Heart right ventricle (tissue), 16 donors: ENCODE measurements at regions of chr17 and their contacts with region 1.

Region 1: DNA sequence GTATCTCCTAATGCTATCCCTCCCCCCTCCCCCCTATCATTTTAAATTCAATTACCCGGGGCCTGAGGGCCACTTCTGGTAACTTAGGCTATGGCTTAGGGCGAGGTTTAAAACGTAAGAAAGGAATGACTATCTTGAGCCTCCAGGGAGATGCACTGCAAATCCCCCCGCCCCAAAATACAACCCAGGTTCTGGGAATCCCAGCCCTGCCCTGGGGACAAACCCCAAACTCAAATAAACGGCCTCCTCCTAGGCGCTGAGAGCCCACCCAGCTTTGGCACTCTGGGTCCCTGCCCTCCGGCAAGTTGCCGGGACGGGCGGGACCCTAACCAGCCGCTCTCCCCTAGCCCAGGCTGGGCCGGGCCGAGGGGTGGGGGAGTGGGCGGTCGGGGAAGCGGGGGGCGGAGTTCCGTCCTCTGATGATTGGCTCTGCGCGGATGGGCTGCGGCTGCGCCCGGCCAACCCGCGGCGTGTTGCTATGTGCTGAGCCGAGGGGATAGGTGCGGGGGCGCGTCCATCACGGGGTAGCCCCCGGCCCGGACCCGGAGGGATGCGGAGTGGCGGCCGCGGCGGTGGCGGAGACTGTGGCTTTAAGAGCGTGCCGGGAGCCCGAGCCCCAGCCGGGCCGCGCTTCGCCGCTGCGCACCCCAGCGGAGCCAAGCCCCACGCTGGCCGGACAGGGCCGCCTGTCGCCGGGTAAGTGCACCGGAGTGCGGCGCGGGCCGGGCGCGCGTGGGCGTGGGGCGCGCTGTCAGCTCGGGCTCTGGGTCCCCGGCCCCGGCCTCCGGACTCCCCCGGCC is at the start of gene YPEL2:
- DNase-seq: peak; percentile 98
- ATAC-seq: peak; percentile 92 to 96 (median 94)
- H3K4me3 ChIP-seq: peak within 1 kb of the TSS; percentile 88 to 99 (median 98)
- H3K27ac ChIP-seq: peak within 1 kb of the TSS; percentile 89 to 99 (median 97)
- H3K4me1 ChIP-seq: peaks cover 9 to 81% (median 76%) of the 10 kb centered on the region in 9 donors
- H3K27me3 ChIP-seq: no peaks in the 10 kb centered on the region
- CTCF ChIP-seq: no peak
- total RNA-seq, gene YPEL2: 12.0 to 57.1 (median 42.0) TPM

Region 2: DNA sequence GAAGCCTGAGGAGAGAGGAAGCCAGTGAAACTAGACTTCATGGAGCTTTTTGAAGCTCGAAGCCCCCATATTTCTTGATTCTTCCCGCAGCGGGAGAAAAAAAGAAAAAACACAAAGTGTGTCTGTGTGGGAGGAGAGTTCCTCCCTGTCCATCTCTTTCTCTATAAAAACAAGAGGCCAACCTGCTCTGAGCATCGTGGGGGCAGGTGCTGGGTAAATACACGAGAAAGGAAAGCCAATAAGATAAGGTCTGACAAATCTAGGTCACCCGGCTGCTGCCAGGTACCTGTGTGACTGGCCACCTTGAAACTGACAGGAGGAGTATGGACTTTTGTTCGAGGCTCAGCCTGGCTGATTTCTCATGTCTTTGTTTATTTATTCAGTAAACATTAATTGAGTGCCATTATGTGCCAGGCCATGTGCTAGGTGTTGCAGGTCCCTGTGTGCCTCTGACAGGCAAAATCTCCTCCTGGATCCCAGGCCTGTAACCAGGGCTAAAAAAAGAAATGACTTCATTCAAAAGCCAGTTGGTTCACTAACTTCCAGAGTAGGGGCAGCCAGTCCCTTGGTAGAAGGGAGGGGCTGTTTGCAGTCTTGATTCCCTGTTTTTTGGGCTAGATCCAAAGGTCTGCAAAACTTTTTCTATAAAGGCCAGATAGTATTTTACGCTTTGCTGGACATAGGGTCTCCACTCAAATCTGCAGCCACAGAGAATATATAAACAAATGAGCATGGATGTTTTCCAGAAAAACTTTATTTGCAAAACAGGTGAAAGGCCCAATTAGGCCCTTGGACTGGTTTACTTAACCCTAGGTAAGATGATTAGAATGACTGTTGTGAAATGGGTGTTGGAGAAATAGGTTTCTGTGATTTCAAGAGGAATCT is 35.7 kb after region 1 on chr17:
- intact Hi-C with region 1: loop called in 7 of 10 experiments (anchors 2 to 5 kb)
- DNase-seq: peak in 1 of 2 donors; percentile 71
- ATAC-seq: peak; percentile 71 to 85 (median 81)
- H3K4me3 ChIP-seq: peak overlapping the region in 1 of 10 donors; percentile 10
- H3K27ac ChIP-seq: peak overlapping the region; percentile 89 to 97 (median 92)
- H3K4me1 ChIP-seq: peaks cover 63 to 100% (median 99%) of the 10 kb centered on the region in 9 donors
- H3K27me3 ChIP-seq: no peaks in the 10 kb centered on the region
- CTCF ChIP-seq: no peak

Region 3: DNA sequence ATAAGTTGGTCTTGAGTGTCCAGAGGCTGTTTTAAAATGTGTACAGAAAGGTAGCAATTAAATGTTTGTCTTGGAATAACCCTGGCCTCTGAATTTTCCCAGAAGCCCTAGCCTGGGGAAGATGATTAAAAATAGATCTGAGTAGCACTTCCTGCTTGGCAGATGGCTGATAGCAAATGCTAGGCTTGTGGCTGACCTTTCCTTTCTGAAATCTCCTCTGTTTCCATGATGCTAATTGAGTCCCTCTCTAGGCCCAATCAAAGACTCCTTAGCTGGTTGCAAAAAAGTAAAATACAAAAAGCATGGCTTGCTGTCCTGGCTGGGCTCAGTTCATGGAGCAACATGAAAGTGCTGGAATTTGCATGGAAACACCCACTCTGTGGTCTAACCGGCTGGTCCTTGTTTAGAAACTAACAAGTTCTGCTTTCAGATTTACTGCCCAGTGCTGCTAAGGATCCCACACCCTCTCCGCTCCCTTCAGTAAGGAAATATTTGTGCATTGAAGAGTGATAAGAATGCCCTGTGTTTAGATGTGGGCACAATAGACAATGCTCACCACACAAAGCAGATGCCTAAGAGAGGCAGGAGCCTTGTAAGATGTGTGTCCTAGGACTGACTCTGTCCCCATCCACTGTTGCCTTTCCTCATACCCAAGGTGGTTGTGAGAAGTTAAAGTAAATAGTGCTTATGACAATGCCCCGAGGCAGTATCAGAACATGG is 41.0 kb after region 1 on chr17:
- intact Hi-C with region 1: loop called in 7 of 10 experiments (anchors 2 to 5 kb)
- DNase-seq: peak in 1 of 2 donors; percentile 80
- ATAC-seq: peak; percentile 69 to 88 (median 84)
- H3K4me3 ChIP-seq: peak overlapping the region in 4 of 10 donors; percentile 4 to 10 (median 6)
- H3K27ac ChIP-seq: peak overlapping the region; percentile 89 to 97 (median 92)
- H3K4me1 ChIP-seq: peaks cover 69 to 100% (median 99%) of the 10 kb centered on the region in 9 donors
- H3K27me3 ChIP-seq: no peaks in the 10 kb centered on the region
- CTCF ChIP-seq: no peak

Region 4: DNA sequence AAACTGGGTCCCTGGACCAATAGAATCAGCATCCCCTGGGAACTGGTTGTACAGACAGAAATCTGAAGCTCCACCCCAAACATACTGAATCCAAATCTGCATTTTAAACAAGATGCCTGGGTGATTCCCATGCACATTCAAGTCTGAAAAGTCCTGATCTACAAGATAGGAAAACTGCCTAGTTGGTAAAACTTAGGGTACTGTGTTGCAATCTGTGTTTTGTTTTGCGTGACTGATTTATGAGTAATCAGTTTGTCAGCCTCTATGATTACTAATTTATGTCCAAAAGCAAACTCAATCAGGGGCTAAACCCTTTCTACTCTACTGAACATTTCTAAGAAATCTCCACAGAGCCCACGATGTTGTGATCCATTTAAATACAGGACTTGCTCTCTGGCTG is 103.9 kb after region 1 on chr17:
- intact Hi-C with region 1: loop called in 9 of 10 experiments (anchors 1 to 5 kb)
- DNase-seq: no peak
- ATAC-seq: peak in 1 of 8 donors; percentile 34
- H3K4me3 ChIP-seq: no peak overlapping the region
- H3K27ac ChIP-seq: peak overlapping the region in 1 of 10 donors; percentile 29
- H3K4me1 ChIP-seq: peaks cover 2 to 70% (median 31%) of the 10 kb centered on the region in 9 donors
- H3K27me3 ChIP-seq: no peaks in the 10 kb centered on the region
- CTCF ChIP-seq: no peak

Region 5: DNA sequence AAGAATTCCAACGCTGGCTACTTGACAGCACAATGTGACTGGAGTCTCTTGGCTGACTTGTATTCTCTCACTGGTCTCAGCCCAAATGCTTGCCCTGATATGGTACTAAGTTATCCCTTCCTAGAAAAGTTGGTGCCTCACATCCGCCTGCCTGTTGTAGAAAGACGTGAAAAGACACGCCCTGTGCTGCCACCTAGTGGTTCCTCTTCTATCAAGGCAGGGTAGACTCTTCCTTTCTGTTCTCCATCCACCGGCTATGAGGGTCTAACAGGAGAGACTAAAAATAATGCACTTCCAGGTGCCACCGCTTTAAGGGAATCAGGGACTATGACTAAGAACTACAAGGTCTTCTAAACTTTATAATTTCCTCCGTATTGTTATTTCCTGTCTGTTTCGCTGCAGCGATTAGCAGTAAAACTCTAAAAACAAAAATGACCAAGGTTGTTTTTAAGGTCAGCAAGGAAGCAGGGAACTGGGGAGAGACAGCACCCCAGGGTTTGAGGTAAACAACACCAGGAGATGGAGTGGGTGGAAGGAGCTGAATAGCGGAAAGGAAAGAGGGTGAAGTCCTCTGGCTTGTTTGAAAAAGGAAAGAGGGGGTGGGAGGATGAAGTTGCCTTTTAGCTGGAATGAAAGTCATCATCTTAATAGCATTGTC is 109.6 kb after region 1 on chr17:
- intact Hi-C with region 1: loop called (anchors 1 to 5 kb)
- DNase-seq: peak; percentile 74 to 96
- ATAC-seq: peak; percentile 88 to 96 (median 94)
- H3K4me3 ChIP-seq: peak overlapping the region in 5 of 10 donors; percentile 13 to 25 (median 16)
- H3K27ac ChIP-seq: peak overlapping the region in 9 of 10 donors; percentile 49 to 84 (median 81)
- H3K4me1 ChIP-seq: peaks cover 5 to 61% (median 35%) of the 10 kb centered on the region in 9 donors
- H3K27me3 ChIP-seq: no peaks in the 10 kb centered on the region
- CTCF ChIP-seq: peak; percentile 78 to 96 (median 89)

Region 6: GRCh38 chr17:59451706-59452105 is 120.4 kb after region 1 on chr17:
- intact Hi-C with region 1: no loop called
- DNase-seq: no peak
- ATAC-seq: no peak
- H3K4me3 ChIP-seq: no peak overlapping the region
- H3K27ac ChIP-seq: no peak overlapping the region
- H3K4me1 ChIP-seq: peaks cover 0 to 6% (median 0%) of the 10 kb centered on the region in 9 donors
- H3K27me3 ChIP-seq: no peaks in the 10 kb centered on the region
- CTCF ChIP-seq: no peak